Sigmoid colon (tissue), 7 donors: ENCODE measurements at regions of chr13 and their contacts with region 1.

Region 1: DNA sequence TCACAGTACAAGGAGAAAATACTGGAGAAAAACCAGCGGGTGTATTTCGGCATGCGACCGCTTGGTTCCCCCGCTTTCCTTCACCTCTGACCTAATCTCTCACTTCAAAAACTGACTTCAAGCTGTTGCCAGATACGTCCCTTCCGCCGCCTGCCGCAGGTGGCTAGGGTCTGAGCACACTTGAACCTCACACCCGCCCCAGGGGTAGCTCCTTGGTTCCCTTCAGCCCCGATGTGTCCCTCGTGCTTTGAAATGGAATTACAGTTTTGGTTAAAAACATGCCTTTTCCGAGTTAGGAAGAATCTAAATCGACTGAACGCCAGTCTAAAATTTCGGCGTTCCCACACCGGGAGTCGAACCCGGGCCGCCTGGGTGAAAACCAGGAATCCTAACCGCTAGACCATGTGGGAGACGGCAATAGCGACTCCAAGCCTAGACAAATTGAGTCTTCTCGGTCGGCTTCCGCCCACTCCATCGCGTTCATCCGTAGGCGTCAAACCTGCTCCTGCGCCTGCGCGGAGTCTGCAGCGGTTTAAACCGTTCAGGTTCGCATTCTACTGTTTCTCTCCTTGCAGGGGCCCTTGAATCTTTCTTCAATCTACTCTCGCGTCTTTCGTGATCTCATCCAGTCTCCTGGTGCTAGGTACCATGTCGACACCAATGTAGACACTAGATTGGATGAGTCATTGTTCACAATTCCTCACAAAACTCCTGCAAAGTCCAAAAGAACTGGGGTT is 71.5 kb downstream of the NUFIP1 start:
- DNase-seq: peak; percentile 98
- H3K4me3 ChIP-seq: peak overlapping the region; percentile 30 to 52 (median 49)
- H3K27ac ChIP-seq: peak overlapping the region; percentile 89 to 97 (median 93)
- H3K4me1 ChIP-seq: peaks cover 0 to 44% (median 31%) of the 10 kb centered on the region in 4 donors
- H3K27me3 ChIP-seq: no peaks in the 10 kb centered on the region
- CTCF ChIP-seq: peak; percentile 37 to 69 (median 64)
- EP300 ChIP-seq: no peak
- POLR2A ChIP-seq: peak; percentile 55 to 66

Region 2: DNA sequence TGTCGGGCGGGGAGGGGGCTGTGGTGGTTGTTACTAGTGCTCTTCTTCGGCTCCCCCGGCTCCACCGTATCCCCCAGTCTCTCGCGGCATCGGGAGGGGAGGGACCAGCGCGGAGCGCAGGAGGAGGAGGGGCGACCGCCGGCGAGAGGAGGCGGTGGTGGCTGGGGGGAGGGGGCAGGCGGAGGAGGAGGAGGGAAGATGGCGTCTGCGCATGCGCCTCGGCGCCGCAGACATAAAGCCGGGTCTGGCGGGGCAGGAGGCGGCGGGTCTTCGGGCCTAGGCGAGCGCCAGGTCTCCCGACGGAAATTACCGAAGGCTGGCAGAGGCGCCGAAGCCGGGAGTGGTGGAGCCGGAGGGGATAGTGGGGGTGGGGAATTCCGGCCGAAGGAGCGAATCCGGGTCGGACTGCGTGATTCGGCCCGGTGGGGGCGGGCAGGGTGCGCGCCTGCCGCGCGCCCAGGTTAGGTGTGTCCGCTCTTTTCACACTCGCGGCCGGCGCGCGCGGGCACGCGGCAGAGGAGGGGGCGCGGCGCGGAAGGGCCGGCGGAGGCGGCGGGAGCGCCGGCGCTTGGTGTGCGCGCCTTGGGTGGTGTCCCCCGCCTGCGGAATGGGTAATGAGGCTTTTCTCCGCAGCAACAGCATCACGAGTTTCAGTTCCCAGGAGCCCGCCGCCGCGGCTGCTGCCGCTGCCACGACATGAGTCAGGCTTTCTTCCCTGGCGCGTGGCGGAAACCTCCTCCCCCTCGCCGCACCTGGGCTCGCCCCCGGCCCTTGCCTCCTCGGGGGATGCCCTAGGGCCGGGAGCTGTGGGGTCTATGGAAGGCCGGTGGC is 340.3 kb before region 1 on chr13:
- intact Hi-C with region 1: loop called (anchors 5 kb)
- DNase-seq: peak; percentile 98
- H3K4me3 ChIP-seq: peak overlapping the region; percentile 81 to 95 (median 89)
- H3K27ac ChIP-seq: peak overlapping the region; percentile 97 to 99 (median 99)
- H3K4me1 ChIP-seq: peaks cover 0 to 40% (median 28%) of the 10 kb centered on the region in 4 donors
- H3K27me3 ChIP-seq: no peaks in the 10 kb centered on the region
- CTCF ChIP-seq: no peak
- EP300 ChIP-seq: no peak
- POLR2A ChIP-seq: peak; percentile 40 to 55

Region 3: DNA sequence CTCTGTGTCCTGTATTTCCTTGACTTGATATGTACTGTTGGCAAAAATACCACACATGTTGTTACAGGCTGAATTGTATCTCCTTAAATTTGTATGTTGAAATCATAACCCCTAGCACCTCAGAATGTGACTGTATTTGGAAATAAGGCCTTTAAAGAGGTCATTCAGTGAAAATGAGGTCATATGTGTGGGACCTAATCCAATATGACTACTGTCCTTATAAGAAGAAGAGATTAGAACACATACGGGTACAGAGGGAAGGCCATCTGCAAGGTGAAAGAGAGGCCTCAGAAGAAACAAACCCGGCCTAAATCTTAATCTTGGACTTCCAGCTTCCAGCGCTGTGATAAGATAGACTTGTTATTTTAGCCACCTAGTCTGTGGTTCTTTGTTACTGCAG is 131.0 kb before region 1 on chr13:
- intact Hi-C with region 1: no loop called
- DNase-seq: no peak
- H3K4me3 ChIP-seq: no peak overlapping the region
- H3K27ac ChIP-seq: no peak overlapping the region
- H3K4me1 ChIP-seq: no peaks in the 10 kb centered on the region
- H3K27me3 ChIP-seq: no peaks in the 10 kb centered on the region
- CTCF ChIP-seq: no peak
- EP300 ChIP-seq: no peak
- POLR2A ChIP-seq: no peak

Region 4: DNA sequence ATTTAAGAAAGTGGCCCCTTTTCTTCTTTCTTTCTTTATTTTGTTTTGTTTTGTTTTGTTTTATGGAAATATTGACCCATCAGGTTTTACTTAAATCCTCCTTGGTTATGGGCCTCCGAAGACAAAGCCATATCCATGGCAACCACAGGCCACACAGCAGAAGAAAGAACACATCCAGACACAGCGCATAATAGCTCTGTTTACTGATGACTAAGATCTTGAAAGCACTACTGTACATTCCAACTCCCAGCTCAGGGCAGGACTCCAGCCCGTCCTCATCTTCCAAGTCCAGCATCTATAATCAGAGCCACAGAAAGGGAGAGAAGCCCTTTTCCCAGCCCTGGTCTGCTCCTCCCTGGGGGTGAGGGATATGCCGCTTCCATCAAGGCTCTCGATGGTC is 12.8 kb before region 1 on chr13:
- intact Hi-C with region 1: loop called (anchors 2 kb)
- DNase-seq: peak; percentile 85
- H3K4me3 ChIP-seq: no peak overlapping the region
- H3K27ac ChIP-seq: peak overlapping the region; percentile 77 to 89 (median 86)
- H3K4me1 ChIP-seq: peaks cover 0 to 55% (median 51%) of the 10 kb centered on the region in 4 donors
- H3K27me3 ChIP-seq: no peaks in the 10 kb centered on the region
- CTCF ChIP-seq: no peak
- EP300 ChIP-seq: peak in 1 of 4 donors; percentile 19
- POLR2A ChIP-seq: no peak